ENCODE measurements at regions of chr20 and their contacts with region 1.

Region 1: GRCh38 chr20:25195014-25195961 is at the start of gene ENTPD6:
- DNase-seq: peak; percentile 88 to 96
- H3K4me3 ChIP-seq: peak within 1 kb of the TSS; percentile 62 to 79
- H3K27ac ChIP-seq: peak within 1 kb of the TSS; percentile 79 to 86
- H3K4me1 ChIP-seq: peaks cover 0 to 40% (median 24%) of the 10 kb centered on the region in 4 donors
- H3K27me3 ChIP-seq: no peaks in the 10 kb centered on the region
- CTCF ChIP-seq: no peak

Region 2: GRCh38 chr20:25237610-25238318 is 42.5 kb after region 1 on chr20:
- intact Hi-C with region 1: loop called (anchors 5 kb)
- DNase-seq: peak; percentile 89 to 92
- H3K4me3 ChIP-seq: no peak overlapping the region
- H3K27ac ChIP-seq: peak overlapping the region; percentile 74 to 80
- H3K4me1 ChIP-seq: peaks cover 0 to 65% (median 61%) of the 10 kb centered on the region in 4 donors
- H3K27me3 ChIP-seq: no peaks in the 10 kb centered on the region
- CTCF ChIP-seq: no peak

Region 3: GRCh38 chr20:25247956-25248785 is 52.9 kb after region 1 on chr20 and contains the start of gene PYGB:
- intact Hi-C with region 1: loop called (anchors 5 kb)
- DNase-seq: peak; percentile 56 to 88
- H3K4me3 ChIP-seq: peak within 1 kb of the TSS; percentile 81 to 92
- H3K27ac ChIP-seq: peak within 1 kb of the TSS; percentile 98 to 99
- H3K4me1 ChIP-seq: peaks cover 4 to 48% (median 41%) of the 10 kb centered on the region in 4 donors
- H3K27me3 ChIP-seq: no peaks in the 10 kb centered on the region
- CTCF ChIP-seq: no peak

Region 4: DNA sequence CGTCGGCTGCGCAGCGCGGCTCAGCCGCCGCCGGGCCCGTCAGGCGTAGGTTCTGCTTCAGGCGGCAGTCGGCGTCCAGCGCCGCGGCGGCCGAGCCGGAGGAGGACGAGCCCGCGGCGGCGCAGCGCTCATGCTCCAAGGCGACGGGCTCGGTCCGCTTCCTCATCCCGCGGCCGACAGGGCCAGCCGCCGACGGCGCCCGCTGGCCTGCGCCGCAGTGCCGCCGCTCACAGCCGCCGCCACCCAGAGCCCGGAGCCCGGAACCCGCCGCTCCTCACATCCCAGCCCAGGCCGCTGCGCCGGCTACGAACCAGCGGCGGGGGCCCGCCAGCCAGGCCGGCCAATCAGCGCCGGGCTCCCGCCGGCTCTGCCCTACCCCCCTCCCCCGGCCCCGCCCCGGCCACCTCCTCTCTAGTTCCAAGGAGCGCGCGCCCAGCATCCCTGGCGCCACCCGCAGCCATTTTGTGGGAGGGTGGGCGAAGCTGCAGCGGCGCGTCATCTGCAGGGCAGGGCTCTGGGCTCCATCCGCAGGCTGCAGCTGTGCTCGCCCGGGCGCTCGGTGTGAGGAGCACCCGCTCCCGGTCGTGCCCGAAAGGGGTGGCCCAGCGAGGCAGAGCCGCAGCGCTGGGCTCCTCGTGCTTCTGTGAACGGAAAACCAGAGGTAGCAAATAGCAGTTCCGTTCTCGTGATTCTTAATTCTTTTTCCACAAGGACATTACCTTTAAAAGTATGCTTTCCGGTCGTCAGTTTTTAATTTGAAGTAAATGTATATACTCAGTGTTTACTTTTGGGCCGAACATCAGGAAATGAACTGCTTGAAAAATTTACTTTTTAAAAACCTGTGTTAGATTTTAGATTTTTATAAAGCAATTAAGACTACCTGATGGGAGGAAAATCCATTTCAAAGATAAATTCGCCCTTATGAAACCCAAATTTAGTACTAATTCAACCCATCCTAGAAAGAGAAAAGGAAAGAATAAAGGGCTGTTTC is 195.5 kb after region 1 on chr20 and contains the start of gene ABHD12:
- intact Hi-C with region 1: loop called (anchors 10 kb)
- DNase-seq: peak; percentile 96 to 98
- H3K4me3 ChIP-seq: peak within 1 kb of the TSS; percentile 64 to 85
- H3K27ac ChIP-seq: peak within 1 kb of the TSS; percentile 78 to 80
- H3K4me1 ChIP-seq: peaks cover 0 to 12% (median 8%) of the 10 kb centered on the region in 4 donors
- H3K27me3 ChIP-seq: no peaks in the 10 kb centered on the region
- CTCF ChIP-seq: no peak